ENCODE measurements at regions of chr17 and their contacts with region 1.

Region 1: GRCh38 chr17:78360371-78361224 is 721 bp upstream of the SOCS3 start:
- DNase-seq: peak; percentile 97
- ATAC-seq: peak; percentile 25
- H3K4me3 Mint-ChIP-seq: peak overlapping the region; percentile 87
- H3K27ac Mint-ChIP-seq: peak overlapping the region; percentile 89
- H3K4me1 Mint-ChIP-seq: peaks cover 41% of the 10 kb centered on the region
- H3K27me3 Mint-ChIP-seq: peaks cover 26% of the 10 kb centered on the region

Region 2: GRCh38 chr17:78341559-78342448 is 18.8 kb before region 1 on chr17:
- POLR2A ChIA-PET with region 1: interaction called, 18 read pairs
- DNase-seq: no peak
- ATAC-seq: no peak
- H3K4me3 Mint-ChIP-seq: no peak overlapping the region
- H3K27ac Mint-ChIP-seq: no peak overlapping the region
- H3K4me1 Mint-ChIP-seq: peaks cover 22% of the 10 kb centered on the region
- H3K27me3 Mint-ChIP-seq: peaks cover 21% of the 10 kb centered on the region